Caco-2 (cell line): ENCODE measurements at regions of chr5 and their contacts with region 1.

Region 1: GRCh38 chr5:29697785-29698414 is 1495.6 kb upstream of the CDH6 start:
- DNase-seq: peak in 1 of 2 experiments; percentile 33
- H3K4me3 ChIP-seq: no peak overlapping the region
- H3K4me3 Mint-ChIP-seq: no peak overlapping the region
- H3K27ac Mint-ChIP-seq: no peak overlapping the region
- H3K4me1 ChIP-seq: no peaks in the 10 kb centered on the region
- H3K4me1 Mint-ChIP-seq: no peaks in the 10 kb centered on the region
- H3K27me3 ChIP-seq: no peaks in the 10 kb centered on the region
- H3K27me3 Mint-ChIP-seq: no peaks in the 10 kb centered on the region
- CTCF ChIP-seq: peak; percentile 57 to 59

Region 2: DNA sequence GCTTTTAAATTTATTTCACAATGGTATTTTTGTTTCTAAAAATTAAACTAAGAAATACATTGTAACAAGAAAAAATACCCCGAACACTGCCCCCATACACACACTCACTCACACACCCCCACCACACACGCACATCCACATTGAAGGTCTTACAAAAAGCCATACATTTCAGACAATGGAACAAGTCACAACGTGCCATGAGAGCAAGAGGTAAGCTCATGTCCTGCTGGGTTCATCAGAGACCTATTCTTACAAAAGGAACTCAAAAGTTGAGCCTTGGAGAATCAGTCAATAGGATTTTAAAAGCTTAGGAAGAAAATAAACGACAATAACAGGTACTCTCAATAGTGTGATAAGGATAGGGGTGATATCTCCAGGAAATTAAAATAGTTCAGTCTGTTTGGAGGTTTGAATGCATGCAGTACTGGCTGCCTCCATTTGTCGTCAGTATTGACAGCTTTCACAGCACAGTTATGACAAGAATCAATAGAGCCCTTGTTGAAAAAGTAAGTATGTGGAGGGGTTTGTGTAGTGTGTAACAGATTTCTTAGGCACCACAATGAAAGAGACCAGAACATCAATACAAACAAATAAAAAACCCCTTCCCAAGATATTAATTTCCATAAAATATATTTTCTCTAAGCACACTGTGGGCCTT is 330.6 kb before region 1 on chr5:
- CTCF ChIA-PET with region 1: interaction called, 8 read pairs
- POLR2A ChIA-PET with region 1: no interaction called
- intact Hi-C with region 1: loop called (anchors 1 kb)
- DNase-seq: peak; percentile 18 to 26
- H3K4me3 ChIP-seq: no peak overlapping the region
- H3K4me3 Mint-ChIP-seq: no peak overlapping the region
- H3K27ac Mint-ChIP-seq: no peak overlapping the region
- H3K4me1 ChIP-seq: no peaks in the 10 kb centered on the region
- H3K4me1 Mint-ChIP-seq: no peaks in the 10 kb centered on the region
- H3K27me3 ChIP-seq: no peaks in the 10 kb centered on the region
- H3K27me3 Mint-ChIP-seq: no peaks in the 10 kb centered on the region
- CTCF ChIP-seq: peak; percentile 53 to 58

Region 3: GRCh38 chr5:29543501-29543900 is 154.4 kb before region 1 on chr5:
- CTCF ChIA-PET with region 1: no interaction called
- POLR2A ChIA-PET with region 1: no interaction called
- intact Hi-C with region 1: no loop called
- DNase-seq: no peak
- H3K4me3 ChIP-seq: no peak overlapping the region
- H3K4me3 Mint-ChIP-seq: no peak overlapping the region
- H3K27ac Mint-ChIP-seq: no peak overlapping the region
- H3K4me1 ChIP-seq: no peaks in the 10 kb centered on the region
- H3K4me1 Mint-ChIP-seq: no peaks in the 10 kb centered on the region
- H3K27me3 ChIP-seq: no peaks in the 10 kb centered on the region
- H3K27me3 Mint-ChIP-seq: peaks cover 4% of the 10 kb centered on the region
- CTCF ChIP-seq: no peak

Region 4: GRCh38 chr5:29561565-29561964 is 136.3 kb before region 1 on chr5:
- CTCF ChIA-PET with region 1: no interaction called
- POLR2A ChIA-PET with region 1: no interaction called
- intact Hi-C with region 1: no loop called
- DNase-seq: no peak
- H3K4me3 ChIP-seq: no peak overlapping the region
- H3K4me3 Mint-ChIP-seq: no peak overlapping the region
- H3K27ac Mint-ChIP-seq: no peak overlapping the region
- H3K4me1 ChIP-seq: no peaks in the 10 kb centered on the region
- H3K4me1 Mint-ChIP-seq: no peaks in the 10 kb centered on the region
- H3K27me3 ChIP-seq: no peaks in the 10 kb centered on the region
- H3K27me3 Mint-ChIP-seq: no peaks in the 10 kb centered on the region
- CTCF ChIP-seq: no peak